A549 (cell line): ENCODE measurements at regions of chr7 and their contacts with region 1.

Region 1: DNA sequence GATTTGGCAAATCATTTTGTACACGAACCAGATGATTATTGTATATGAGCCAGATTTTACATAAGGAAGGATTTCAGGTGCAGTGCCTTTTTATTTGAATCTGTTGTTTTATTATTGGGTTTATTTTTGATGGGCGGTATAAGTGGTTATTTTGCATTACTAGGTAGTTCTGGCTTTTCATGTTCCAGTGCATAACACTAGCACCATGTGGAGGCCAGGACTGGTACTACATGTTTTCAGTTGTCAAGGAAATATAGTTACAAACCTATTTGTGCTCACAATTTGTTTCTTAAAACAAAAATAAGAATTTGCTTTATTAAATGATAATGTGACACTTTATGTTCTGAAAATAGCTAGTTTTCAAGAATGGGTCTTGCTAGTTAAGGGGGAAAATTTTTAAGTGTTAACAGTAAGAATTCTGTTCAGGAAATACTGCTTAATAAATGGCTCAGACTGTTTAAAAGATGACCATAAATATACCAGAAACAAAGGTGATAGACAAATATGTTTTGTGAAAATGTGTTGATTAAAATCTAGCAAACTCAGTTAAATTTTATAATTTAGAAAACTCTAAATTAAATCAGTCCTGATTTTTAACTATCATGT is 7.1 kb upstream of the SEMA3E start:
- DNase-seq: peak; percentile 13 to 70
- ATAC-seq: peak; percentile 76 to 81; a peak in 4 of 6 replicates
- H3K4me3 ChIP-seq: no peak overlapping the region
- H3K27ac ChIP-seq: no peak overlapping the region
- H3K4me1 ChIP-seq: no peaks in the 10 kb centered on the region
- CTCF ChIP-seq: peak; percentile 95
- EP300 ChIP-seq: no peak
- POLR2A ChIP-seq: no peak
- RAD21 ChIP-seq: peak; percentile 95 to 97

Region 2: DNA sequence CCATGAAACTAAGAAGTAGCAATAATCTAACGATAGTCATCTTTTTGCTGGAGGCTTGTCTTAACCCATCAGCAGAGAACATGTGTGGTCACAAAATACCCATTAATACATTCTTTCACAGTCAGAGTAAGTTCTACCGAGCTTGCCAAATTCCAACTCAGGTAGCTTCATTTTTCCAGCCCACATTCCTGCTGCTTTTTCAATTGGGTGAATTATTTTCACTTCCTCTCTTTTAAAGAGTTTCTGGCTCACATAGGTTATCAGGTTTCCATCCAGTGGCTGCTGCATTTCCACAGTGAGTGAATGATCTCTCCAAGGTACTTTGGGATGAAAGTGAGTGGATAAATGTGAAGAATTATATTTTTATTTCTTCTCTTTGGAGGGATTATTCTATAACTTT is 240.2 kb before region 1 on chr7:
- CTCF ChIA-PET with region 1: interaction called, 10 read pairs
- POLR2A ChIA-PET with region 1: no interaction called
- DNase-seq: no peak
- ATAC-seq: no peak
- H3K4me3 ChIP-seq: no peak overlapping the region
- H3K27ac ChIP-seq: no peak overlapping the region
- H3K4me1 ChIP-seq: peaks cover 11% of the 10 kb centered on the region
- CTCF ChIP-seq: no peak
- EP300 ChIP-seq: no peak
- POLR2A ChIP-seq: no peak
- RAD21 ChIP-seq: no peak

Region 3: DNA sequence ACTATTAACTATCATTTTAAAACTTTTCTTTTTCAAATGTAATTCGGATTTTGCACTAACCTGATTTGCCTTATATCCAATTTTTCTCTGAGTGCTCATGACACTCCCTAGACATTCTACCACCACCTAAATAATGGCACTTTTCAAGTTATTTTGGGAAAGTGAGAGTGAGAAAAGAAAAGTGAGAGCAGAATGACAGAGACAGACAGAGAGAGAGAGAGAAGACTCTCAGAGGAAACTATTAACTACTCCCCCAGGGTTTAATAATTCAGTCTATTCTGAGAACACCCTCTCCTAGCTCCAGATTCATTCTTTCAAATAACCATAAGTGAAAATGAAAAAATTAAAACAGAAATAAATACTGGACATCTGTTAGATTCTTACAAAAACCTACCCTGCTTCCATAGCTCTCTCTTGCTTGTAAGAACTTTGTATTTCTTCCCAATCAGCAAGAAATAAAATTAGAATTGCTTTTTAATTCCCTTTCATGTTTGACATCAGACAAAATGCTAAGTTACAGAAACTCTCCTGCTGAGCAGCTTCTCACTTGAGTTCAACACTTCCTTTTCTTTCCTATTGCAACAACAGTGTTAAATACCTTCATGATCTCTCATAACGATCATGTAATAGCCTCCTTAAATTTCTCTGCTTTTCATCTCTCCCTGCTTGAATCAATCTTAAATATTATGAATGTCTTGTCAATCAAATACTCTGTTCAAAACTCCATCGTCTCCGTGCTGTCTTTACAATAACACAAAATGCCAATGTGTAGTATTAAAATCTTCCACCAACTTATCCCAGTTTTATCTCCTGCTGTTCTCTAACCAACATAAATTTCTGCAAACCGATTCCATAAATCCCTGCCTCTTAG is 198.8 kb before region 1 on chr7:
- CTCF ChIA-PET with region 1: no interaction called
- POLR2A ChIA-PET with region 1: no interaction called
- DNase-seq: no peak
- ATAC-seq: no peak
- H3K4me3 ChIP-seq: no peak overlapping the region
- H3K27ac ChIP-seq: no peak overlapping the region
- H3K4me1 ChIP-seq: no peaks in the 10 kb centered on the region
- CTCF ChIP-seq: no peak
- EP300 ChIP-seq: no peak
- POLR2A ChIP-seq: no peak
- RAD21 ChIP-seq: no peak

Region 4: GRCh38 chr7:83672157-83672556 is 16.1 kb after region 1 on chr7:
- CTCF ChIA-PET with region 1: interaction called, 11 read pairs
- POLR2A ChIA-PET with region 1: no interaction called
- DNase-seq: no peak
- ATAC-seq: no peak
- H3K4me3 ChIP-seq: no peak overlapping the region
- H3K27ac ChIP-seq: no peak overlapping the region
- H3K4me1 ChIP-seq: peaks cover 8% of the 10 kb centered on the region
- CTCF ChIP-seq: no peak
- EP300 ChIP-seq: no peak
- POLR2A ChIP-seq: no peak
- RAD21 ChIP-seq: no peak

Region 5: GRCh38 chr7:83697814-83698530 is 41.9 kb after region 1 on chr7:
- CTCF ChIA-PET with region 1: no interaction called
- POLR2A ChIA-PET with region 1: no interaction called
- DNase-seq: no peak
- ATAC-seq: no peak; a peak in 1 of 6 replicates
- H3K4me3 ChIP-seq: no peak overlapping the region
- H3K27ac ChIP-seq: no peak overlapping the region
- H3K4me1 ChIP-seq: no peaks in the 10 kb centered on the region
- CTCF ChIP-seq: no peak
- EP300 ChIP-seq: no peak
- POLR2A ChIP-seq: no peak
- RAD21 ChIP-seq: no peak